ENCODE measurements at regions of chr19 and their contacts with region 1.

Region 1: GRCh38 chr19:796692-797527 is at the start of gene PTBP1:
- DNase-seq: peak; percentile 100
- H3K4me3 Mint-ChIP-seq: peak within 1 kb of the TSS; percentile 88
- H3K27ac Mint-ChIP-seq: peak within 1 kb of the TSS; percentile 88
- H3K4me1 Mint-ChIP-seq: peaks cover 28% of the 10 kb centered on the region
- H3K27me3 Mint-ChIP-seq: no peaks in the 10 kb centered on the region
- total RNA-seq, gene PTBP1: 510 to 532 TPM

Region 2: DNA sequence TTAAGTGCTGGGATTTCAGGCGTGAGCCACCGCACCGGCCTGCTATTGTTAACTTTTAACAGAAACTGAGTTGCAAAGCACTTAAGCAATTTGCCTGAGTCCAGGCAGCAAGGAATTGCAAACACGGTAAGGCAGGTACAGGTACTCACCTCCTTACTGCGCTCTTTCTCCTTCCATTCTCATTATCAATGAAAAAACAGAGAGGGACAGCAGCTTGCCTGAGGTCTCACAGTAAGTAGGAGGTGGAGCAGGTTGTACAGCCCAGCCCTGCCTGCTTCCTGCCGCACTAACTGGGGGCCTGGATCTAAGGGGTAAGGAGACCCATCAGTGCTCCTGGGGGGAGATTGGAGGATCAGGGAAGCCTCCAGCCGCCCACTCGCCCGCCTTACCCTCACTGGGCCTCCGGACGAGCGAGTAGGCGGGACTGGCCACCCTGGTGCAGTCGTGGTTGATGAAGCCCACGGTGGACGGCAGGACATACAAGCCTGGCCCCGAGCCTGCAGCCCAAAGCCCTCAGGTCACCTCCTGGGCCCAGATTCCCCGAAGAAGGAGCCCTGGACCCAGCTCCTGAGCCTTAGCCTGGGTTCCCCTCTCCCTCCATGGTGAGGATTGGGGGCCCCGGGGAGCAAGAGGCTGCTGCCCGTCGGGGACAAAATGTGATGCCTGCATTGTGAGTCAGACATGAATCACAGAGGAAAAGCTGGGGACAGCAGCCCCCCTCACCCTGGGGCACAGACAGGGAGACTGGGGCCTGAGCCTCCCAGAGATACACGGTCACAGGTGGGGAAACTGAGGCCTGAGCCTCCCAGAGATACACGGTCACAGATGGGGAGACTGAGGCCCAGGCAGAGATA is 324.7 kb before region 1 on chr19:
- CTCF ChIA-PET with region 1: no interaction called
- intact Hi-C with region 1: no loop called
- DNase-seq: no peak
- H3K4me3 Mint-ChIP-seq: no peak overlapping the region
- H3K27ac Mint-ChIP-seq: no peak overlapping the region
- H3K4me1 Mint-ChIP-seq: no peaks in the 10 kb centered on the region
- H3K27me3 Mint-ChIP-seq: no peaks in the 10 kb centered on the region

Region 3: GRCh38 chr19:572140-572742 is 224.7 kb before region 1 on chr19 and contains the start of gene BSG:
- CTCF ChIA-PET with region 1: no interaction called
- intact Hi-C with region 1: loop called (anchors 1 kb)
- DNase-seq: peak; percentile 99
- H3K4me3 Mint-ChIP-seq: peak within 1 kb of the TSS; percentile 90
- H3K27ac Mint-ChIP-seq: peak within 1 kb of the TSS; percentile 98
- H3K4me1 Mint-ChIP-seq: peaks cover 36% of the 10 kb centered on the region
- H3K27me3 Mint-ChIP-seq: no peaks in the 10 kb centered on the region
- total RNA-seq, gene BSG: 160 to 161 TPM

Region 4: DNA sequence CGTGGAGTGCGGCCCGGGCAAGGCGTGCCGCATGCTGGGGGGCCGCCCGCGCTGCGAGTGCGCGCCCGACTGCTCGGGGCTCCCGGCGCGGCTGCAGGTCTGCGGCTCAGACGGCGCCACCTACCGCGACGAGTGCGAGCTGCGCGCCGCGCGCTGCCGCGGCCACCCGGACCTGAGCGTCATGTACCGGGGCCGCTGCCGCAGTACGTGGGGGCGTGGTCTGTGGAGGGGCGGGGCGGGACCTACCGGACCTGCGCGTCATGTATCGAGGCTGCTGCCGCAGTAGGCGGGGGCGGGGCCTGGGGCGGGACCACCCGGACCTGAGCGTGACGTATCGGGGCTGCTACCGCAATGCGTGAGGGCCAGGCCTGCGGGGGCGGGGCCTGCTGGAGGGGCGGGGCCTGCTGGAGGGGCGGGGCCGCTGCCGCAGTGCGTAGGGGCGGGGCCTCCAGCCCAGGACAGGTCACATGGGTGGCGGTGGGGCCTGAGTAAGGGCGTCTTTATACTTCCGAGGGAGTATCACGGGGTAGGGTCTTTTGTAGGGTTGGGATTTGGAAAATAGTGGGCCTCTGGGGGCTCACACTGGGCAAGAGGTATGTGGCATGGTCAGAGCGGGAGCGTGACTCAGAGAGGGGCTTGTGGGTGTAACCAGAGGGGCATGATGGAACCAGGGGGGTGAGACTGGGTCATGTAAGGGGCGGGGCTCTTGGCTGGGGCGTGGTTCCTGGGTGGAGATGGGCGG is 116.5 kb before region 1 on chr19:
- CTCF ChIA-PET with region 1: no interaction called
- intact Hi-C with region 1: loop called (anchors 1 kb)
- DNase-seq: peak; percentile 100
- H3K4me3 Mint-ChIP-seq: peak overlapping the region; percentile 94
- H3K27ac Mint-ChIP-seq: peak overlapping the region; percentile 99
- H3K4me1 Mint-ChIP-seq: peaks cover 11% of the 10 kb centered on the region
- H3K27me3 Mint-ChIP-seq: peaks cover 5% of the 10 kb centered on the region

Region 5: GRCh38 chr19:860481-861101 is 63.7 kb after region 1 on chr19:
- CTCF ChIA-PET with region 1: interaction called, 4 read pairs
- intact Hi-C with region 1: loop called (anchors 2 kb)
- DNase-seq: peak; percentile 45
- H3K4me3 Mint-ChIP-seq: peak overlapping the region; percentile 27
- H3K27ac Mint-ChIP-seq: no peak overlapping the region
- H3K4me1 Mint-ChIP-seq: peaks cover 13% of the 10 kb centered on the region
- H3K27me3 Mint-ChIP-seq: peaks cover 6% of the 10 kb centered on the region

Region 6: DNA sequence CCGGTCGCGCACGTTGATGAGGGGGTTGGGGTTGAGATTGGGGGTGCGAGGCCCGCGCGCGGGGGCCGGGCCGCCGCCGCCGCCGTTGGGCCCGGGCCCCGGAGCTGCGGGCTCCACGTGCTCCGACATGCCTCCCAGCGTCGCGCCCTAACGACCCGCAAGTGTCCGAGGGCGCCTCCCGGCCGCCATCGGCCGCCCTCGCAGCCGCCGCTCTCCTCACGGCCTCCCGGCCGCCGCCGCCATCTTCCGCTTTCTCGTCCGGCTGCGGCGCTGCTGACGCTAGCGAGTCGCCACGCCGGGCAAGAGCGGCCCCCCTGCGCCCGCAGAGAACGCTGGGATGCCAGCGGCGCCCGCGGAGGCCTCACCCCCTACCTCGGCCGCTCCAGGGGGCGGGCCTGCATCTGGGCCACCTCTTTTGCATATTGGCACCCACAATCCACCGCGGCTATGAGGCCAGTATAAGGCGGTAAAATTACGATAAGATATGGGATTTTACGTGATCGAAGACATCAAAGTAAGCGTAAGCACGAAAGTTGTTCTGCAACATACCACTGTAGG is 224.0 kb after region 1 on chr19 and contains the start of gene TMEM259:
- CTCF ChIA-PET with region 1: no interaction called
- intact Hi-C with region 1: loop called (anchors 2 kb)
- DNase-seq: peak; percentile 98
- H3K4me3 Mint-ChIP-seq: peak within 1 kb of the TSS; percentile 95
- H3K27ac Mint-ChIP-seq: peak within 1 kb of the TSS; percentile 98
- H3K4me1 Mint-ChIP-seq: peaks cover 41% of the 10 kb centered on the region
- H3K27me3 Mint-ChIP-seq: no peaks in the 10 kb centered on the region
- total RNA-seq, gene TMEM259: 105 to 109 TPM

Region 7: DNA sequence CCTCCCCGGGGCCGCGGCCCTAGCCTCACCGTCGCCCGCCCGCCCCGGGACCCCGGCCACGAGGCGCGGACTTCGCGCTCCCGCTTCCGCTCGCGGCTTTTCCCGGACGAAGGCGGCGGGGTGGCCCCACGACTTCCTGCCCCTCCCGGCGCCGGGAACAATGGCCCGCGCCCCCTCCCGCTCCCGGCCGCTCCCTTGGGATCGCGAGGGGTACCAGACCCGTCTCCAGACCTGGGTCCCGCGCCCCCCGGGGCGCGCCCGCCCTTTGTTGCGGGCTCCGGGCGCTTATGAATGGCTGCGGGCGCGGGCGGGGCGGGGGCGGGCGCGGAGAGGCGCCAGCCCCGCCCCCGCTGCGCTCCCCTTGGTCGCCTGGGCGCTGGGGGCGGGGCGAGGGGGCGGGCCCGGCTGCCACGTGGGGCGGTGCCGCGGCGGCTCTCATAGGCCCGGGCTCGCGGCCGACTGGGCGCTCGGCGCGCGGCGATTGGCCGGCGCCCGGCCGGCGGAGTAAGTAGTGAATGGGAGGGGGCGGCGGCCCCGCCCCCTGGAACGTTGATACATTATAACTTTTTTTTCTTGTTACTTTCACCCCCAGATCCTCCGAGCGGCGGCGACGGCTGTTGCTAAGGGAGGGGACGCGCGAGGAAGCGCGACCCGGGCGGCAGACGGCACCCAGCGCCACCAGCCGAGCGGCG is 452.5 kb after region 1 on chr19:
- CTCF ChIA-PET with region 1: interaction called, 3 read pairs
- intact Hi-C with region 1: loop called (anchors 5 kb)
- DNase-seq: peak; percentile 96
- H3K4me3 Mint-ChIP-seq: peak overlapping the region; percentile 75
- H3K27ac Mint-ChIP-seq: peak overlapping the region; percentile 78
- H3K4me1 Mint-ChIP-seq: peaks cover 10% of the 10 kb centered on the region
- H3K27me3 Mint-ChIP-seq: no peaks in the 10 kb centered on the region

Measured in activated naive CD4-positive, alpha-beta T cell treated with anti-CD3 and anti-CD28 coated beads for 36 hours (primary cell).